ENCODE measurements at regions of chr1 and their contacts with region 1.

Region 1: GRCh38 chr1:85692730-85693314 is 15.4 kb downstream of the ZNHIT6 start:
- DNase-seq: peak; percentile 17
- H3K4me3 ChIP-seq: no peak overlapping the region
- H3K27ac ChIP-seq: no peak overlapping the region
- H3K4me1 ChIP-seq: no peaks in the 10 kb centered on the region
- H3K27me3 ChIP-seq: no peaks in the 10 kb centered on the region
- CTCF ChIP-seq: peak; percentile 41 to 44

Region 2: DNA sequence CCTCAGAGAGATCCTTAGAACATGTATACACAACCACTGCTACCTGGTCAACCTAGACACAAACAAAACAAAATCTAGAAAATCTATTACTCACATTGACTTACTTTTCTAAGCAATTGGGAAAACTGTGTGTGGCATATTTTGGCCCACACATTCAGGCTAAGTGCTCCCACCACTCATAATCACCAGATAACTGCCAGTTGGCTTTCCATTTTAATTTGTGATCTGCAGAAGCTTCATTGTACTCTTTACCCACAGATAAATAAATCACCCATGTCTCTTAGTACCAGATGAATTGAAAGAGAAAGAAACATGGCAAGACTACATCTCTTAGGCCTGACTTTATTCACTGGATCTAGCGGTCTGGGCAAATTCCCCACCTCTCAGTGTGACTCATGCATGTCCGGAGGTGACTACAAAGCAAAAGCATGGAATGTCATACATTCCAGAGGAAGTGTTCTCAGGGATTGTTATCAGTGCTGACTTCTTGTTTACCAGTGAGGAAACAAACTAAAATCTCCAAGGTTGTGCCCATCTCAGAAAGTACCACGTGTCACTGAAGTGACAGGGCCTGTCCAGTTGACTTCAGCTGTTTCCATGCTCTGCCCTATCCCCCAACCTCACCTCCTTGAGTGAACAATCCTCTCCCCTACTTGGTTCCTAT is 364.0 kb before region 1 on chr1:
- CTCF ChIA-PET with region 1: no interaction called
- dilution Hi-C with region 1: loop called (anchors 25 kb)
- in situ Hi-C with region 1: loop called in 1 of 2 experiments (anchors 10 kb)
- intact Hi-C with region 1: no loop called
- DNase-seq: peak; percentile 89
- H3K4me3 ChIP-seq: no peak overlapping the region
- H3K27ac ChIP-seq: peak overlapping the region; percentile 87
- H3K4me1 ChIP-seq: peaks cover 51% of the 10 kb centered on the region
- H3K27me3 ChIP-seq: no peaks in the 10 kb centered on the region
- CTCF ChIP-seq: no peak

Region 3: GRCh38 chr1:85406887-85407533 is 285.8 kb before region 1 on chr1:
- CTCF ChIA-PET with region 1: no interaction called
- dilution Hi-C with region 1: no loop called
- in situ Hi-C with region 1: no loop called
- intact Hi-C with region 1: loop called (anchors 10 kb)
- DNase-seq: peak; percentile 68
- H3K4me3 ChIP-seq: no peak overlapping the region
- H3K27ac ChIP-seq: peak overlapping the region; percentile 82
- H3K4me1 ChIP-seq: peaks cover 3% of the 10 kb centered on the region
- H3K27me3 ChIP-seq: no peaks in the 10 kb centered on the region
- CTCF ChIP-seq: no peak

Region 4: GRCh38 chr1:85576642-85577418 is 116.0 kb before region 1 on chr1:
- CTCF ChIA-PET with region 1: no interaction called
- dilution Hi-C with region 1: no loop called
- in situ Hi-C with region 1: no loop called
- intact Hi-C with region 1: loop called (anchors 2 kb)
- DNase-seq: peak; percentile 62
- H3K4me3 ChIP-seq: peak overlapping the region; percentile 61 to 76 (median 64)
- H3K27ac ChIP-seq: peak overlapping the region; percentile 62
- H3K4me1 ChIP-seq: peaks cover 52% of the 10 kb centered on the region
- H3K27me3 ChIP-seq: no peaks in the 10 kb centered on the region
- CTCF ChIP-seq: peak; percentile 42 to 64

Region 5: GRCh38 chr1:85581802-85582686 is 110.8 kb before region 1 on chr1:
- CTCF ChIA-PET with region 1: interaction called, 4 read pairs
- dilution Hi-C with region 1: no loop called
- in situ Hi-C with region 1: no loop called
- intact Hi-C with region 1: loop called (anchors 2 kb)
- DNase-seq: peak; percentile 72
- H3K4me3 ChIP-seq: peak overlapping the region; percentile 86 to 95 (median 92)
- H3K27ac ChIP-seq: peak overlapping the region; percentile 86
- H3K4me1 ChIP-seq: peaks cover 40% of the 10 kb centered on the region
- H3K27me3 ChIP-seq: no peaks in the 10 kb centered on the region
- CTCF ChIP-seq: peak; percentile 59 to 63

Region 6: GRCh38 chr1:85612704-85613361 is 80.0 kb before region 1 on chr1:
- CTCF ChIA-PET with region 1: no interaction called
- dilution Hi-C with region 1: no loop called
- in situ Hi-C with region 1: no loop called
- intact Hi-C with region 1: loop called (anchors 1 kb)
- DNase-seq: peak; percentile 49
- H3K4me3 ChIP-seq: no peak overlapping the region
- H3K27ac ChIP-seq: peak overlapping the region; percentile 85
- H3K4me1 ChIP-seq: peaks cover 37% of the 10 kb centered on the region
- H3K27me3 ChIP-seq: no peaks in the 10 kb centered on the region
- CTCF ChIP-seq: peak; percentile 71 to 83

Region 7: DNA sequence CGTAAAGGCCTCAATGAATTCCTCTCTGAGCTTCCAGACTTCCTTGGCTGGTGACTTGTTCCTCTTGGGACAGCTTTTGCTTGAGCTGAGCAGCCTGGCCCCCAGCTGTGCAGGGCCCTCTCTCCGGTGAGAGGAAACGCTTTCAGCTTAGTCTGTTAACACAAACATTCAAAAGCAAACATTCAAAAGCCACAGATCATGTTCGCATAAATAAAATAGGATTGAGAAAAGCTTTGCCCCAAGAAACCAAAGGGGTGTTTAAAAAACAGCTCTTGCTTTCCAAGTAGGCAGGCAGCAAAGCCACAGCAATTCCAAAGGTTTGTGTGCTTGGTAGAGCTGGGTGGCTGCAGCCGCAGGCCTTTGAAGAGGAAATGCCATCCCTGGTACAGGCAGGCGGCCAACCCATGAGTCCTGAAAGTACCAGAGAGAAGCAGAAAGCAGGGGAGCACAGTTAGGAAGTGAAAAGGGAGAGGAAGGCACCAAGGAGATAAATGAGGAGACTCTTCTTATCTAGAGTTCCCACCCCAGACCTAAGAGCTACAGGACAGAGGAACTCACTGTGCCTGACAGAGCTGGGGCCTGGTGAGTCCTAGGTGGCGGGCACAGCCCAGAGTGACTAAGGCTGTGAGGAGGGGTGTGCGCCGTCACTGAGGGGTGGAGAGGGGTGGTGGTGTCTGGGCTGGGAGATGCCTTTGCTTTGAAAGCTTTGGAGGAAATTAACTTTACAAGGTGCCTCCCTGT is 63.9 kb before region 1 on chr1:
- CTCF ChIA-PET with region 1: no interaction called
- dilution Hi-C with region 1: no loop called
- in situ Hi-C with region 1: no loop called
- intact Hi-C with region 1: no loop called
- DNase-seq: peak; percentile 49
- H3K4me3 ChIP-seq: no peak overlapping the region
- H3K27ac ChIP-seq: no peak overlapping the region
- H3K4me1 ChIP-seq: peaks cover 13% of the 10 kb centered on the region
- H3K27me3 ChIP-seq: no peaks in the 10 kb centered on the region
- CTCF ChIP-seq: no peak

Region 8: GRCh38 chr1:85678193-85678592 is 14.6 kb before region 1 on chr1:
- CTCF ChIA-PET with region 1: no interaction called
- dilution Hi-C with region 1: no loop called
- in situ Hi-C with region 1: no loop called
- intact Hi-C with region 1: no loop called
- DNase-seq: no peak
- H3K4me3 ChIP-seq: no peak overlapping the region
- H3K27ac ChIP-seq: no peak overlapping the region
- H3K4me1 ChIP-seq: no peaks in the 10 kb centered on the region
- H3K27me3 ChIP-seq: no peaks in the 10 kb centered on the region
- CTCF ChIP-seq: no peak